ENCODE measurements at regions of chr20 and their contacts with region 1.

Region 1: DNA sequence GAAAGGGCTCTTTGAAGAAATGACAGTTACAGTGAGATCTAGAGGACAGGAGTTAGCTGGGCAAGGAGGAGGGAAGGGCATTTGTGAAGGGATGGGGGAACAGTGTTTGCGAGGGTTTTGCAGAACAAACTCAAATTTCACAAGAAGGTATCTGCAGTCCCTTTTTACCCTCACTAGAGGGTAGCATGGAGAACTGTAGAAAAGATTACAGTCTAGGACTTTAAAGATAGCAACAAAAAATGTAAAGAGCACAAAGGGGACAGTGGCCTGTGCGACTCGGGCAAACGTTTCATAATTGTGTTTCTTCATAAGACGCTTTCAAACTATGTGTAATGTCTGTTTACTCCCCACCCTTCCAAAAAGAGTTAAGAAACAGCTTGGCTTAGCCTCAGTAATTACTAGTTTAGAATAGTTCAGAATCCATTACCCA is 21.2 kb upstream of the ASXL1 start:
- DNase-seq: no peak
- H3K4me3 ChIP-seq: no peak overlapping the region
- H3K27ac ChIP-seq: no peak overlapping the region
- H3K4me1 ChIP-seq: peaks cover 16% of the 10 kb centered on the region
- H3K27me3 ChIP-seq: no peaks in the 10 kb centered on the region
- CTCF ChIP-seq: peak; percentile 38 to 61

Region 2: DNA sequence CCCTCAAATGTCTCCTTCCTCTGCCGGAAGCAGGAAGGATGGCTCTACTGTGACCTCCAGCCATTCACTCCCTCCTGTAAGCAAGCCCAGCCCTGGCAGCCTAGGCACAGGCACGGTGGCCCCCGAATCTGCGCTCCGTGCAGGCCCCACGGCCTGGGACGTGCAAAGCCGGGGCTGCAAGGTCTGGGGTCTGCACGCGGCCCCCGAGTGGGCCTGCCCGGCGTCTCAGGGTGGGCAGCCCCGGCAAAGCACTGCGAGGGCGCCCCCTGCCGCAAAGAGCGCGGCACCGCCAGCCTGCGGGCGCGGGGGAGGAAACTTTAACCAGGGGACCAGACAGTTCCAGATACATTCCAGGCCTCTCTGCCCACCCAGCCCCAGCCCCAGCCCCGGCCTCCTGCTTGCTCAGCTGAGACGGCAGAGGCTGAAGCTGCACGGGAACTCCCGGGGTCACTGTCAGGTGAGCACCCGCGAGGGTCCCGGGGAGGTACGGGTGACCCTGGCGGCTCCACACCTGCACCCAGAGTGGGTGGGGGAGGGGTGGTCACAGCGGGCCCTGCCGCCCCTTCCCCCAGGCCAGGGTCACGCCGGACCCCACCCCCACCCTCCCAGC is 120.0 kb after region 1 on chr20:
- CTCF ChIA-PET with region 1: no interaction called
- dilution Hi-C with region 1: no loop called
- in situ Hi-C with region 1: no loop called
- intact Hi-C with region 1: loop called (anchors 10 kb)
- DNase-seq: no peak
- H3K4me3 ChIP-seq: peak overlapping the region in 2 of 3 experiments; percentile 31
- H3K27ac ChIP-seq: no peak overlapping the region
- H3K4me1 ChIP-seq: peaks cover 9% of the 10 kb centered on the region
- H3K27me3 ChIP-seq: no peaks in the 10 kb centered on the region
- CTCF ChIP-seq: peak; percentile 38 to 60

Region 3: DNA sequence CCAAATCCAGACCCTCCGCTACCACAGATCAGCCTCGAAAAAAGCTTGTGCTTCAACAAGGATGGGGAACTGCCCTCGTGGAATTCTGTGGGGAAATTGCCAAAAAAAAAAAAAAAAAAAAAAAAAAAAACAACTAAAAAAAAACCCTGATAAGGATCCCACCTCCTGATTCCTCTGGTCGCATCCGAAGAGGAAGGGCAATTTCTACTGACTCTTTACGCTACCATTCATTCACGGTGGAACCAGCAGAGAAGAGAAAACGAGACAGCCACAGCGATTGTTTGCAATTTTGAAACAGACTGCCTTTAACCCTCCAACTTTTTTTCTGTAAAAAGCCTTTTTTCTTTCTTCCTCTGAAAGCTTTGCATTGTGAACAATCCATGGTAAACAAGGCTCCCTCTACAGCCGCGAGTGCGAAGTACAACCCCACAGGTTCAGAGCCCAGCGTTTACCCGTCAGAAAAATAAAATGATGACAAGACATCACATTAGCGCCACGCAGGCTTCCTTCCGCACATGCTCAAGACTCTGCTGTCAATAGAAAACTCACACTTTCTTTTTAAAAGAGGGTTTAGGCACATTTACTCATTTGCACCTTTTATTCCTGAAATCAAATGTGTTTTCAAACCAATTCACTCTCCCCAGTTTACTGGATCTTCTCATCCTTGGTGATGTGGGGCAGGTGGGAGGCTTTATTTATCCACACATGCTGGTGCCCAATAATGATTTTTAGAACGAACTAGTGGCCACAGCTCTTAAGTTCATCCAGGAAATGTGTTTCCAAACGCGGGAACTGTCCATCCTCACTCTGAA is 148.2 kb after region 1 on chr20:
- CTCF ChIA-PET with region 1: no interaction called
- dilution Hi-C with region 1: no loop called
- in situ Hi-C with region 1: no loop called
- intact Hi-C with region 1: loop called (anchors 2 kb)
- DNase-seq: peak; percentile 60
- H3K4me3 ChIP-seq: peak overlapping the region; percentile 51 to 63 (median 52)
- H3K27ac ChIP-seq: no peak overlapping the region
- H3K4me1 ChIP-seq: peaks cover 14% of the 10 kb centered on the region
- H3K27me3 ChIP-seq: no peaks in the 10 kb centered on the region
- CTCF ChIP-seq: peak; percentile 64 to 77